Astrocyte of the cerebellum (primary cell): ENCODE measurements at regions of chr1 and their contacts with region 1.

Region 1: DNA sequence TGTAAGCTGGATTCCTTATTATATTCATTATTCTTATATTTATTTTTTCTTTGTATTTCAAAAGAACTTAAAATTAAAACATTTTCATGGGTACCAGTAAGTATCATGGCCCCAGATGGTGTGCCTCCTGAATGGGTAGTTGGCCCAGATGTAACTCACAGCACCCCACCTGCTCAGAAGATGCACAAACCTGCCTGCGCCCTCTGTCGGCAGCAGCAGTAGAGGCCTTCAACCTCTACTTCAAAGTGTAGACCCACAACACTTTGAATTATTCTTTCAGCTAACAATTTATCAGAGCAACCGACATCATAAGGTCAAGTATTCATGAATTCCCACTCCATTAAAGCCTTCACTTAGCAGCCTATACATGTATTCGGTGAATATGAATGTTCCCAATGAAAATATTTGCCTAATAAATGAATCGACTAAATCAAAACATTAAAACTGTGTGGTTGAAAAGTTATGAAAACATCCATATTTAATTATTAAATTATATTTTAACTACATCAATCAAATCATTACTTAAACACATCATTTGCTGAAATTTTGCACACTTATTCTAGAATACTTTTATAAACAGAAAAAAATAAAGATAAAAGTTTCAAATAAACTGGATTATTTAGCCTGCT is 25.4 kb downstream of the PIGM start:
- DNase-seq: peak; percentile 26
- H3K4me3 ChIP-seq: no peak overlapping the region
- CTCF ChIP-seq: peak; percentile 99

Region 2: GRCh38 chr1:159780583-159781582 is 225.5 kb before region 1 on chr1 and contains the start of gene DUSP23:
- in situ Hi-C with region 1: loop called (anchors 25 kb)
- DNase-seq: peak; percentile 95
- H3K4me3 ChIP-seq: peak within 1 kb of the TSS; percentile 69
- CTCF ChIP-seq: peak; percentile 91

Region 3: DNA sequence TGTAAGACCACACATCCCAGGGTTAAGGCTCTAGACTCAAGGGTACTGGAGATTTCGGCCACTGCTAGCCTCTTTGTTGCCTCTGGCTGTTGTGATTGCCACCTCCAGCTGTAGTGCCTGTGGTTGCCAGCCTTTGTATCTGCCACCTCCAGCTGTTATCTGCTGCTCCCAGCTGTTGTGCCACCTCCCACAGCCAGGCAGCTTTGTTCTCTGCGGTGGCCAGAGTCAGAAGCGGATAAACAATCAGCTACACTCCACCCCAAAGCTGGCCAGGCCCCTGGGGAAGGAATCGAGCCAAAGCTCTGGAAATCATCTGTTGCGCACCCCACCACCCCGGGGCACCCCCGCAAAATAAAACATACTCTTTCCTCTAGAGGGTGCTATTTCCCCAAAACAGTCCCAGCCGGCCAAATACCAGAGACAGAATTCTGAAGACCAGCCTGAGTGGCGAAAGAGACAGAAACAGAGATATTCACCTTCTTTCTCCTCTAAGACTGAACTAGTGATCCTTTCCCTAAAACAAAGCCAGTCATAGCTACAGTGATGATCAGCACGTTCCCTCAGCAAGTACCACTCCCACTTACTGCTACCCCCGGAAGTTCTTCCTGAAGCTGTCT is 40.2 kb after region 1 on chr1:
- in situ Hi-C with region 1: no loop called
- DNase-seq: no peak
- H3K4me3 ChIP-seq: no peak overlapping the region
- CTCF ChIP-seq: peak; percentile 58

Region 4: DNA sequence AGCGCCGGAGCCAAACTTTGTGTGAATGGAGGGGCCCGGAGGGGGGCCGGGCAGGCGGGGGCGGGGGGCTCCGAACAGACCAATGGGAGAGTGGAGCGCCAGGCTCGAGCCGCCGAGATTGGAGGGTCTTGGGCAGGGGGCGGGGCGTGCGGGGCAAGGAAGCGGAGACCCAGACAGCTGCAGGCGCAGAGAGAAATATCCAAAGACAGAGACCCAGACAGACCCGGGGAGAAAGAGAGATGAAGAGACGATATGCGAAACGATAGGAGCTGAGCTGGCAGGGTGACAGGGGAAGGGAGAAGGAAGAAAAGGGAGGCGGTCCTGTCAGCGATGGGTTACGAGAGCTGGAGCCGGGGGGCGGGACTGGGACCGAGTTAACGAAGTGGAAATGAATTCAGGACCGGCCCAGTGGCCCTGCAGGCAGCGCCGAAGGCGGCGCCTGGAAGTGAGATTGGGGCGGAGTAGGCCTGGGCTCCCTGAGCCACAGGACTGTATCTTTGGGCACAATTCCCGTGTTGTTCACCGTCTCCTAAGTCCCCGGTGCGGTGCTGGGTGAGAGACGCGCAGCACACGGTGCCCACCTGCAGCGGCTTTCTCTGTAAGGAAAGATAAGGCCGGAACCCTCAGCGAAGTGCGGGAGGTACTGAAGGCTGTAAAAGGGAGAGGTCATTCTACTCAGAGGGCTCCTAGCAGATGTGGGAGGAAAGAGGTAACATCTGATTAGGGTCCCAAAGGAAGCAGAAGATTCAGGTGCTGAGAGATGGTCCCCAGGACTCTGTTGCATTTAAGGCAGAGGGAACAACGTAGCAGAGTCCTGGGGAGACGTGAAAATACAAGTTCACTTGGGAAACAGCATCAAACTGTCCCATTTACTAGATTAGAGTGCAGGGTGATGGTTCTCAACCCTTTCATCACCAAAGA is 64.1 kb after region 1 on chr1:
- in situ Hi-C with region 1: no loop called
- DNase-seq: peak; percentile 18
- H3K4me3 ChIP-seq: peak overlapping the region; percentile 43
- CTCF ChIP-seq: no peak